Tibial artery (tissue), 4 donors: ENCODE measurements at regions of chr1 and their contacts with region 1.

Region 1: DNA sequence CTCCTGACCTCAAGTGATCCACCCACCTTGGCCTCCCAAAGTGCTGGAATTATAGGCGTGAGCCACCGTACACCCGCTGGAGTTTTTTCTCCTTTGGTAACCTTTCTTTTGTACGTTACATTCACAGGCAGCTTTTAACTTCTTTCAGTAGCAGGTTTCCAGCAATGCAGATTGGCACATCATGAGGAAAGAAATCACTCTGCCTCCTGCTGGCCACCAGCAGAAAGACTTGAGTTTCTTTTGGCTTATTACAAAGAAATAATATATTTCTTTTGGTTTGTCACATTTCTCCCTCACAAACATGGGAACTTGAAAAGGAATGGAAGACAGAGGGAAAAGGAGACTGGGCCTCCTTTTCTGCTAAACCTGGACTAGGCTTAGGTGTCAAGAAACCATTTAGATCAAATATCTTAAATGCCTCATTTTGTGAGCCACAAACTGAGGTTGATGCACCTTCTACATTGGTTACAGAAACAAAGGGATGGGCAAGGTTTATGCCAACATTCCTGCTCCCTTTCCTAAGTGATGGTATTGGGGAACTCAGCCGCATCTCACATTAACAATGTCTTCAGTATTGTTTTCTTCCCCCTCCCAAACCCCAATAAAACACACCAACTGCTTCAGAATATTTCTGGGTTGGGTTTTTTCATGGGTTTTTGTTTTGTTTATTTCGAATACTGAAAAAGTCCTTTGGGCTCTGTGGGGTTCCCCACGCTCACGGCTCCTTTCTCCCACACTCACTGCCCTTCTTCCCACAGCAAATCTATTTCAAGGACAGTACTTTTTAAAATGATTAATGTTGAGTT is 7.7 kb downstream of the ENSA start:
- DNase-seq: peak; percentile 70 to 79
- H3K4me3 ChIP-seq: no peak overlapping the region
- H3K27ac ChIP-seq: peak overlapping the region; percentile 53 to 61
- H3K4me1 ChIP-seq: peaks cover 0 to 43% (median 32%) of the 10 kb centered on the region in 4 donors
- H3K27me3 ChIP-seq: no peaks in the 10 kb centered on the region
- CTCF ChIP-seq: peak; percentile 69 to 79

Region 2: GRCh38 chr1:150578965-150579798 is 42.5 kb before region 1 on chr1 and contains the start of gene MCL1:
- intact Hi-C with region 1: loop called (anchors 5 kb)
- DNase-seq: peak; percentile 93 to 97
- H3K4me3 ChIP-seq: peak within 1 kb of the TSS; percentile 93 to 97
- H3K27ac ChIP-seq: peak within 1 kb of the TSS; percentile 99
- H3K4me1 ChIP-seq: peaks cover 0 to 28% (median 12%) of the 10 kb centered on the region in 4 donors
- H3K27me3 ChIP-seq: no peaks in the 10 kb centered on the region
- CTCF ChIP-seq: no peak